RWPE1 (cell line): ENCODE measurements at regions of chr9 and their contacts with region 1.

Region 1: DNA sequence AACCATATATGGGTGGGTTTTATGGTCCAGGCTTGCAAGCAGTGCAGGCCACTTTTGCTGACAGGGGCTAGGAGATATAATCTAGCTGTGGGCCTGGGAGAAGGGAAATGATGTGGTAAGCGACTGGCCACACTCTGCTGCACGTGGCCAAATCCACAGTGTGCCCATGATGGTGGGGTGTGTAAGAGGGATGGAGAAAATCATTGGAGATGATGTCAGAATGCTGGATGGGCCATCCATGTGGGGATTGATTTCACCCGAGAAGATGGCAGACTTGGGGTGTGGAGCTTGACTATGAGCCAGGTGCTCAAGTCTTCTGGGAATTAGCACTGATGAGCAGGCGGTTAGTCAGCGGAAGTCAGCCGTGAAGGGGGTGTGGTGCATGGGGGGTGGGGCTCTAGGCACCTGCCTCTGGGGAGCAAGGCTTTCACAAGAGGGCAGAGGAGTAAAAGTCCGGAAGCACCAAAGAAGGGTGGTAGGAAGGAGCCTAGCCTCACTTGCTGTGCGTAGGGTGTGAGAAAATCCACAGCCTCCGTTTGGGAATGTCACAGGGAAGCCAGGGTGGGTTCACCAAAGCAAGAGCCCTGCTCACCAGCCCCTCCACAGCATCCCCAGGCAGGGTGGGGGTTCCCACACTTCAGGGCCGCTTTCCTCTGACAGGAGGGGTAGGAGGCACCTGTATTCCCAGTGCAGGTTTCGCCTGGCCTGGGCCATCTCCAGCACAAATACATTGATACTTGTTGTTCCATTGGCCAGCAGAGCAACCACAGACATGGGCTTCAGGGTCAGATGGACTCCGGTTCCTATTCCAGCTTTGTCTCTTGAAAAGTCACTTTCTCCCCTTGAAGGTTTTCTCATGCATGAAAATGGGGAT is 44.5 kb upstream of the ANGPTL2 start:
- DNase-seq: peak; percentile 98
- H3K27ac ChIP-seq: peak overlapping the region; percentile 79
- CTCF ChIP-seq: no peak

Region 2: DNA sequence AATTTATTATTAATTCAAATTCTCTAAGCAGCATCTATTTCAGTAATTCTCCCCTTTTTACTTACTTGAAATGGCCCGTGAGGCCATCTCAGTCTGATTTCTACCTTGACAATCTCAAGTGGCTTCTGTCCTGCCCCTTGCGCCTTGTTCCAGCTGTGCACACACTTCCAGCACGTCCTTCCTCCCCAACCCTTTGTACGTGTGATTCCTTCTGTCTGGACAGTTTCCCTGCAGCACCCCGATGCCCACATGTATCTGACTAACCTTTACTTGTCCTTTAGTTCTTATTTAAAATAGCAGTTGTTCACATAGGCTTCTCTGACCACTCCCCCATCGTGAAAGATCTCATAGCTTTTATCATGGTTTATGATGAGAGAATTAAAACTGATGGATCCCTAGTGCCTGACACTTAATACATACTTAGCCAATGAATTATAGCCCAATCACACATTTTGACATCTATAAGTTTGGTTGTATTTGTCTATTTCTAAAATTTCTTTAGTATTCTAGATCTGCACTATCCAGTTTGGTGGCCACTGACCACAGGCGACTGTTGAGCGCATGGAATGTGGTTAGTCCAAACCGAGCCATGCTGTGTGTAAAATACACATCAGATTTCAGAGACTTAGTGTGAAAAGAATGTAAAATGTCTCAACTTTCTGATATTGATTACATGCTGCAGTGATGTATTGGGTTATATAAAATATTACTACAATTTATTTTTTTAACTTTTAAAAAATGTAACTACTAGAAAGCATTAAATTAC is 292.2 kb before region 1 on chr9:
- CTCF ChIA-PET with region 1: interaction called, 10 read pairs
- POLR2A ChIA-PET with region 1: no interaction called
- DNase-seq: no peak
- H3K27ac ChIP-seq: no peak overlapping the region
- CTCF ChIP-seq: no peak

Region 3: DNA sequence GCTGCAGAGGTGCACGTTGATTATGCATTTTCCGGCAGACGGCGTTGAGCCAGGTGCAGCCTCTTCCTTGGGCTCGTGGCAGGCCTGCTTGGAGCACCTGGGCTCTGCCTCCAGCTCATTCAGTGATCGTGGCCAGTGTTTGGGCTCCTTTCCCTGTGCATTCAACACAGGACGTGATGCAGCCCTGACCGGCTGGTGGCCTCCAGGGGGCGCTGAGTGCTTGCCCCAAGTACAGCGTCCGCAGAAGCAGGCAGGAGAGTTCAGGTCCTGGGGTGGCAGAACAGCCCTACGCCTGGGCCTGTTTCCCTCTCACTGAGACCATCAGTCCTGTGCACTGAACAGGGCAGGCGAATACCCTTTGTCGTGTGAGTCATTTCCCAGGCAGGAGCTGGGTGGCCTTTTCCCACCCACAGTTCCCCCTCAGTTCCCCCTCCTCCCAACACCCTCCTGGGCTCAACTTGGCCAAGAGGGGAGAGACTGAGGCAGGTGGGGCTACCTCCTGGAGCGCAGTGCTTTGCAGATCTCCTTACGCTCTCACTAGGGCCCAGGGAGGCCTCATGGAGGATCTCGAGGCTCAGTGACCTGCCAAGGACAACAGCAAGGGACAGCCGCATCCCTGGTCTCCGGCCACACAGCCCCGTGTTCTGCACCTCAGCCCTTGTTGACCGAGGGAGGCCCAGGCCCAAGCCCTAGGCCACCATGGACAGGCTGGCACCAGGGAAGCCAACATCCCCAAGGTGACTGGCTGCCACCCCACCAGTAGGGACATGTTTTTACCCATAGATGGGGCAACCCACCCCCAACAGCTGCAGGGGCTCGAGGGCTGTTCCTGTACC is 337.3 kb after region 1 on chr9:
- CTCF ChIA-PET with region 1: no interaction called
- POLR2A ChIA-PET with region 1: no interaction called
- DNase-seq: peak; percentile 67
- H3K27ac ChIP-seq: peak overlapping the region; percentile 93
- CTCF ChIP-seq: peak; percentile 97

Region 4: GRCh38 chr9:127586537-127586936 is 419.6 kb after region 1 on chr9:
- CTCF ChIA-PET with region 1: no interaction called
- POLR2A ChIA-PET with region 1: no interaction called
- DNase-seq: peak; percentile 90
- H3K27ac ChIP-seq: peak overlapping the region; percentile 93
- CTCF ChIP-seq: peak; percentile 99